Lower lobe of right lung (tissue), 2 donors: ENCODE measurements at regions of chr15 and their contacts with region 1.

Region 1: DNA sequence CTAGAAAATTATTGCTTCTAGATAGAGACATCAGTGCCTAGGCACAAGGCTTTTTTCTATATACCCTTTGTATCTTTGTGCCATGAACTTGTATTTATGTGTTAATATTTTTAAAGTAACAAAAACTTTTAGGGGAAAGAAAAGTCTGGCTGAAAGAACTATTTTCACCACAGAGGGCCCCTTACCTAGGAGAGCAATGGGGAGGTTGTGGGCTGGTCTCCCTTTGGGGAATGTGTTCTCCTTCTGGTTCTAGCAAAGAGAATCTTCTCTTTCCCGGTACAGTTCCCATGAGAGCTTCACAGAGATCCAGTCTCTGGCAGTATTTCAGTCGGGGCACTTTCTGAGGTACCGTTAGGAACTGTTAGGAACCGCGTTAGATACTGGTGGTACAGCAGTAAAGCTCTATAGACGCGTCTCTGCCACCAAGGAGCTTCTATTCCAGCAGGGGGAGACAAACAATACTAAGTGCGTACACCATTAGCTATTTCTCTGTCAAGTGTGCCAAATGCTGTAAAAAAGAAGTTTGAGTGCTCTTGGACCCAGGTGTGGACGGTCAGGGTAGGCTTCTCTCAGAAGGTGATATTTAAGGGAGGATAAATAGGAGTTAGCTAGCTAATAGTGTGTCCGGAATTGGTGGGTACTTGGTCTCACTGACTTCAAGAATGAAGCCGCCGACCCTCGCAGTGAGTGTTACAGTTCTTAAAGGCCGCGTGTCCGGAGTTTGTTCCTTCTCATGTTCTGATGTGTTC is 4.6 kb upstream of the EPB42 start:
- DNase-seq: no peak
- ATAC-seq: peak; percentile 78 to 82
- H3K4me3 ChIP-seq: no peak overlapping the region
- H3K27ac ChIP-seq: no peak overlapping the region
- H3K4me1 ChIP-seq: no peaks in the 10 kb centered on the region
- H3K27me3 ChIP-seq: no peaks in the 10 kb centered on the region
- CTCF ChIP-seq: peak; percentile 74

Region 2: DNA sequence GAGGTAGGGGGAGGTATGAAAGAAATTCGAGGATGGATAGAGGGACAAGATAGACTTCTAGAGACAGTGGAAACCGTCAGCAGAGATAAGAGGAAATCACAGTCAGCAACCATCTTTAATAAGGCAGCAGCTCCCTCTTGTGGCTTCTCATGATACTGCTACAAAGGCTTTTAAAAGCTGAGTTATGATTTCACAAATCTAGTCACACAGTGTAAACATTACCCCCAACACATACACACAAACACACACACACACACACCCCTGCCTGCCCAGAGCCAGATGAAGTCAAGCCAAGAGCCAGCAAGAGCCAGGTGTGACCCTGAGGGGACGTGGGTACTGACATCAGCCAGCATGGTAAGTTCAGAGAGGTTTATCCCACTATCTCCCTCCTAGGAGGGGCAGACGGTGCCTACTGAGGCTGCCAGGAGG is 60.2 kb after region 1 on chr15:
- intact Hi-C with region 1: loop called (anchors 10 kb)
- DNase-seq: no peak
- ATAC-seq: peak; percentile 81 to 85
- H3K4me3 ChIP-seq: no peak overlapping the region
- H3K27ac ChIP-seq: no peak overlapping the region
- H3K4me1 ChIP-seq: no peaks in the 10 kb centered on the region
- H3K27me3 ChIP-seq: no peaks in the 10 kb centered on the region
- CTCF ChIP-seq: peak; percentile 76